Activated CD4-positive, alpha-beta memory T cell treated with anti-CD3 and anti-CD28 coated beads for 36 hours (primary cell): ENCODE measurements at regions of chr12 and their contacts with region 1.

Region 1: DNA sequence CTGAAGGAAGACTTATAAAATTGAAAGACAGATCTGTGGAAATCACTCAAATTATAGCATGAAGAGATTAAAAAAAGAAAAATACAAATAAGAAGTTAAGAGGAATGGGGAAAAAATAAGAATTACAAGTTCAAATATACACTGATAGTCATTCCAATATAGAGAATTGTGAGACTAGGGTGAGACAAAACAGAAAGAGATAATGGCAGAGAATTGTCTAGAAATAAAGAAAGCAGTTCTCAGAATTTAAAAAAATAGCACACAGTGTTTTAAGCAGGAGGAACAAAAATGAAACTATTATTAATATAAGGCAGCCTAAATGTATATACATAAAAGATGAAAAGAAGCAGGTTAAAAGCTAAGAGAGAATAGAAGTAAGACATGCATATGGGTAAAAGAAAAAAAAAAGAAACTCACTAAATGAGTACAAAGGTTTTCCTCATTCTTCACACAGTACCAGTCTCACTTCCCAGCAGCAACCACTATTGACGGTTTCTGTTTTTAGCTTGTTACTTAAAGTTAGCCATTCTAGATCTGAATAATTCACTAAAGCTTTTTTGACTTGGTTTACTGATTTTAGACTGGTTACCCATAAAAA is 31.1 kb downstream of the SLC38A4 start:
- DNase-seq: peak; percentile 16
- H3K4me3 Mint-ChIP-seq: no peak overlapping the region
- H3K27ac Mint-ChIP-seq: peak overlapping the region; percentile 46
- H3K4me1 Mint-ChIP-seq: peaks cover 17% of the 10 kb centered on the region
- H3K27me3 Mint-ChIP-seq: peaks cover 16% of the 10 kb centered on the region

Region 2: DNA sequence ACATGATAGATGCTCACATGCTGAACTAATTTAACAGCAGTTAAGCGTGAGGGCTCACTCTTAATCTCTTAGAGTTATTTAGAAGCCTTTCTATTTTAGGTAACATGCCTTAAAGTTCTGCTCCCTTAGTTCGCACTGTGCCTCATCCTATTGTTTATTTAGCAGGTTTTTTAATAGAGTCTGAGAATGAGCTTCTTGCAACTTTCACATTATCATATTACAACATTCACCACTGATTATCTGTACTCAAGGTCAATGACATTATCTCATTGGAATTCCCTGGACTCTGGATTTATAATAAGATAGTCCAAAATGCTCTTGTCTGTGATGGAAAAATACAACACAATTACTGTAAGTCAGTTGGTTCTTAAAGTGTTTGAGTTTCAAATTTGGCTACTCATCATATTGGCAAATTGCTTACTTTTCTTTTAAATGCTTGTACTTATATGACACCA is 238.6 kb before region 1 on chr12:
- CTCF ChIA-PET with region 1: no interaction called
- POLR2A ChIA-PET with region 1: no interaction called
- intact Hi-C with region 1: loop called (anchors 10 kb)
- DNase-seq: no peak
- H3K4me3 Mint-ChIP-seq: no peak overlapping the region
- H3K27ac Mint-ChIP-seq: no peak overlapping the region
- H3K4me1 Mint-ChIP-seq: peaks cover 34% of the 10 kb centered on the region
- H3K27me3 Mint-ChIP-seq: no peaks in the 10 kb centered on the region